Activated CD4-positive, alpha-beta T cell treated with anti-CD3 and anti-CD28 coated beads for 36 hours (primary cell): ENCODE measurements at regions of chr15 and their contacts with region 1.

Region 1: GRCh38 chr15:44738340-44738984 is 2.1 kb downstream of the TRIM69 start:
- DNase-seq: no peak
- ATAC-seq: no peak
- H3K4me3 Mint-ChIP-seq: peak overlapping the region; percentile 38
- H3K27ac Mint-ChIP-seq: peak overlapping the region; percentile 47
- H3K4me1 Mint-ChIP-seq: peaks cover 47% of the 10 kb centered on the region
- H3K27me3 Mint-ChIP-seq: no peaks in the 10 kb centered on the region

Region 2: DNA sequence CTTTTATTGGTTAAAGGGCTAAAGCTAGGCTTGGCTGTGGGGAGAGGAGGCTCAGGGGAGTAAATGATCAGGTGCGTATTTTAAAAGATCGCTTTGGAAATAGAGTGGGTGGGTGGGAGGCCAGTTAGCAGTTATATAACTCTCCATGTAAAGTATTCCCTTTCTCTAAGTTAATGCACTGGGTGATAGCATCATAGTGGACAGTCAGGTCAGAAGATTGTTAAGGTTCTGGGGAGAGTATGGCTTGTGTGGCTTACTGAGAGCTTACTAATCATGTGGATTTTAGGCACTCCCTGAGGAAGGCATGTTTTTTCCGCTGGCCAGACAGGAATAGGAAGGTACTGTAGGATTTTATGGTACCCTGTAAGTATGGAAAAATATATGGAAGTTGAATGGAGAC is 207.8 kb before region 1 on chr15:
- CTCF ChIA-PET with region 1: no interaction called
- POLR2A ChIA-PET with region 1: no interaction called
- intact Hi-C with region 1: no loop called
- DNase-seq: no peak
- ATAC-seq: no peak
- H3K4me3 Mint-ChIP-seq: no peak overlapping the region
- H3K27ac Mint-ChIP-seq: peak overlapping the region; percentile 5
- H3K4me1 Mint-ChIP-seq: peaks cover 13% of the 10 kb centered on the region
- H3K27me3 Mint-ChIP-seq: no peaks in the 10 kb centered on the region

Region 3: GRCh38 chr15:44593042-44593736 is 145.3 kb before region 1 on chr15:
- CTCF ChIA-PET with region 1: interaction called, 113 read pairs
- POLR2A ChIA-PET with region 1: interaction called, 3 read pairs
- intact Hi-C with region 1: loop called (anchors 2 to 5 kb)
- DNase-seq: peak; percentile 20
- ATAC-seq: peak; percentile 79
- H3K4me3 Mint-ChIP-seq: no peak overlapping the region
- H3K27ac Mint-ChIP-seq: peak overlapping the region; percentile 25
- H3K4me1 Mint-ChIP-seq: peaks cover 27% of the 10 kb centered on the region
- H3K27me3 Mint-ChIP-seq: no peaks in the 10 kb centered on the region

Region 4: GRCh38 chr15:44633603-44634002 is 104.9 kb before region 1 on chr15:
- CTCF ChIA-PET with region 1: interaction called, 20 read pairs
- POLR2A ChIA-PET with region 1: no interaction called
- intact Hi-C with region 1: no loop called
- DNase-seq: peak; percentile 13
- ATAC-seq: peak; percentile 77
- H3K4me3 Mint-ChIP-seq: peak overlapping the region; percentile 65
- H3K27ac Mint-ChIP-seq: peak overlapping the region; percentile 98
- H3K4me1 Mint-ChIP-seq: peaks cover 26% of the 10 kb centered on the region
- H3K27me3 Mint-ChIP-seq: no peaks in the 10 kb centered on the region

Region 5: DNA sequence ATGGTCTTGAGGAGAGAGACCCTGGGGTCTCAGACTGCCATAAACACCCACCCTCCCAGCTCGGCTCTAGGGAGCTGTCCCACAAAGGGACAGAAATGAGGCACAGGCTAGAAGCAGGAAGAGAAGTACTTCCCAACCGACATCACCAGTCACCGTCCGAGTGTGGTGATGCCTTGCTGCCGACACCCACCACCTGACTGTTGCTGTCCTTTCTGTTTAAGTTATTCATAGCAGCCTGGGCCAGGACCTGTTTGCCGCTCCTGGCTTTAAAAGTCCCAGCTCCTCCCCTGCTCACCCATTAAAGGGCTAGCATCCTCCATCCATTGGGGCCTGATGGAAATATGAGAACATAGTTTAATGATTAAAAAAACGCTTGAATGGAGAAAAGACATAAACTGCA is 61.8 kb before region 1 on chr15:
- CTCF ChIA-PET with region 1: interaction called, 12 read pairs
- POLR2A ChIA-PET with region 1: interaction called, 4 read pairs
- intact Hi-C with region 1: no loop called
- DNase-seq: peak; percentile 67
- ATAC-seq: peak; percentile 68
- H3K4me3 Mint-ChIP-seq: peak overlapping the region; percentile 41
- H3K27ac Mint-ChIP-seq: peak overlapping the region; percentile 89
- H3K4me1 Mint-ChIP-seq: peaks cover 83% of the 10 kb centered on the region
- H3K27me3 Mint-ChIP-seq: no peaks in the 10 kb centered on the region

Region 6: GRCh38 chr15:44753345-44753744 is 14.9 kb after region 1 on chr15:
- CTCF ChIA-PET with region 1: interaction called, 33 read pairs
- POLR2A ChIA-PET with region 1: no interaction called
- intact Hi-C with region 1: no loop called
- DNase-seq: no peak
- ATAC-seq: no peak
- H3K4me3 Mint-ChIP-seq: no peak overlapping the region
- H3K27ac Mint-ChIP-seq: no peak overlapping the region
- H3K4me1 Mint-ChIP-seq: peaks cover 22% of the 10 kb centered on the region
- H3K27me3 Mint-ChIP-seq: no peaks in the 10 kb centered on the region